ENCODE measurements at regions of chr12 and their contacts with region 1.

Region 1: GRCh38 chr12:48851883-48852733 is at the start of gene DDX23:
- DNase-seq: peak; percentile 73 to 93 (median 89)
- ATAC-seq: peak; percentile 98
- H3K4me3 ChIP-seq: peak within 1 kb of the TSS; percentile 96
- H3K4me3 Mint-ChIP-seq: peak within 1 kb of the TSS; percentile 89 to 99 (median 98)
- H3K27ac ChIP-seq: peak within 1 kb of the TSS; percentile 93
- H3K27ac Mint-ChIP-seq: peak within 1 kb of the TSS; percentile 89 to 100 (median 98)
- H3K4me1 ChIP-seq: peaks cover 18 to 24% of the 10 kb centered on the region in 2 donors
- H3K4me1 Mint-ChIP-seq: peaks cover 30 to 49% (median 43%) of the 10 kb centered on the region in 7 donors
- H3K27me3 ChIP-seq: no peaks in the 10 kb centered on the region
- H3K27me3 Mint-ChIP-seq: no peaks in the 10 kb centered on the region
- total RNA-seq, gene DDX23: 84.0 to 160 (median 127) TPM

Region 2: DNA sequence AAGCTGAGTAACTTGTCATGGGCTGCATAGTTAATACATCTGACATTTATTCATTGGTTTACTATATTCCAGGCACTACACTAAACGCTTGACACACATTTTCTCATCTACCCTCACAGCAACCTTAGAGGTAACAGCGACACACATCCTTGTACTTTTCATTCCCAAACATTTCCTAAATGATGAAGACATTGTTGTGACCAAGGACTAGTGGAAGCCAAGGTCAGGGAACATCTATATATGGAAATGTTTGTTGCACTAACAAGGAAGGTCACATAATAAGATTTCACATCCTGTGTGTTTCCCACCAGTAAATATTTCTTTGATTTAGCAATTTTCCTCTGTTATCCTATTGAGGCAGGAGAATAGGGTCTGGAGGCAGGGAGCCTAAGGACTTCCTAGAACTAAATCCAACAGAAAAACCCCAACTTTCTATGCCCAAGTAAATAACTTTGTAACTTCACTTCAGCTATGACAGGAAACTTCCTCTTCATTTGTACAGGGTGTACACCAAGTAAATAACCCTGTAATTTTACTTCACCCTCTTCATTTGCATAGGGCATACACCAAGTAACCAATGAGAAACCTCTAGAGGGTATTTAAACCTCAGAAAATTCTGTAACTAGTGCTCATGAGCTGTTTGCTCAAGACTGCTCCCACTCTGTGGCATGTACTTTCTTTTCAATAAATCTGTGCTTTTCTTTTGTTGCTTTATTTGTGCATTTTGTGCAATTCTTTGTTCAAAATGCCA is 549.8 kb before region 1 on chr12:
- CTCF ChIA-PET with region 1: no interaction called
- POLR2A ChIA-PET with region 1: no interaction called
- intact Hi-C with region 1: no loop called
- DNase-seq: no peak
- ATAC-seq: no peak
- H3K4me3 ChIP-seq: no peak overlapping the region
- H3K4me3 Mint-ChIP-seq: no peak overlapping the region
- H3K27ac ChIP-seq: no peak overlapping the region
- H3K27ac Mint-ChIP-seq: no peak overlapping the region
- H3K4me1 ChIP-seq: no peaks in the 10 kb centered on the region
- H3K4me1 Mint-ChIP-seq: peaks cover 0 to 1% (median 0%) of the 10 kb centered on the region in 7 donors
- H3K27me3 ChIP-seq: no peaks in the 10 kb centered on the region
- H3K27me3 Mint-ChIP-seq: peaks cover 0 to 12% (median 6%) of the 10 kb centered on the region in 5 donors

Region 3: GRCh38 chr12:48814262-48815125 is 37.6 kb before region 1 on chr12:
- CTCF ChIA-PET with region 1: interaction called, 16 read pairs
- POLR2A ChIA-PET with region 1: interaction called, 9 read pairs
- intact Hi-C with region 1: loop called (anchors 1 to 2 kb)
- DNase-seq: peak; percentile 18 to 93 (median 47)
- ATAC-seq: peak; percentile 86
- H3K4me3 ChIP-seq: peak overlapping the region; percentile 59
- H3K4me3 Mint-ChIP-seq: peak overlapping the region; percentile 58 to 95 (median 91)
- H3K27ac ChIP-seq: no peak overlapping the region
- H3K27ac Mint-ChIP-seq: peak overlapping the region in 4 of 9 donors; percentile 32 to 85 (median 66)
- H3K4me1 ChIP-seq: peaks cover 7 to 19% of the 10 kb centered on the region in 2 donors
- H3K4me1 Mint-ChIP-seq: peaks cover 18 to 39% (median 33%) of the 10 kb centered on the region in 7 donors
- H3K27me3 ChIP-seq: no peaks in the 10 kb centered on the region
- H3K27me3 Mint-ChIP-seq: peaks cover 0 to 23% (median 5%) of the 10 kb centered on the region in 5 donors

Region 4: DNA sequence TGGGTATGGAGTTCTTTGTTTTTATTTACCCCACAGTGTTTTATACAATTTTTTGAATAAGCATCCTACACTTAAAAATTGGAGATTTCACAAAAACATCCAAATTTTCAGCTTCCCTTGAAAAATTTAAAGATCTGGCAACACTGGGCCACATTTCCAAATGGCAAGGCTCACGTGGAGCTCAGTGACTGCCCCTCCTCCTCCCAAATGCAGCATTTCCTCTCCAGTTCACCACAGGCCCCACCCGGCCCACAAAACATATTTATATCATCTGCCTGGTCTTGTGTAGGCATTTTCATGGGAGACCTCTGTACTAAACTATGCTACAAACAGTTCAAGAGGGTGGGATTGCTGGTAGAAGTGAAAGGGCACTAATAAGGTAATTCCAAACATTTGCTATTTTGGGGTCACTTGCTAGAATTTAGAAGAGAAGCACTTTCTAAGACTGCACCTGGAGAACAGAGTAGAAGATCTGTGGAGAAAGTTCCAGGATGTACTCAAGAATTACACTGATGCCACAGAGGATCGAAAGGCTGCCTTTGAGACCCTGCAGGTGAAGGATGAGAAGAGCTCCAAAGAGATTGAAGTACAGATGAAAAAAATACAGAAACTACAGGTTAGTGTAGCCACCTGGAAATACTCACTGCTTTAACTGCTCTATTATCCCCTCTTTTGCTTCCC is 65.9 kb after region 1 on chr12:
- CTCF ChIA-PET with region 1: interaction called, 5 read pairs
- POLR2A ChIA-PET with region 1: interaction called, 7 read pairs
- intact Hi-C with region 1: loop called in 1 of 2 experiments (anchors 1 kb)
- DNase-seq: peak in 7 of 9 donors; percentile 39 to 63 (median 57)
- ATAC-seq: peak; percentile 89
- H3K4me3 ChIP-seq: peak overlapping the region; percentile 57
- H3K4me3 Mint-ChIP-seq: peak overlapping the region; percentile 84 to 92 (median 88)
- H3K27ac ChIP-seq: peak overlapping the region; percentile 73
- H3K27ac Mint-ChIP-seq: peak overlapping the region; percentile 81 to 94 (median 90)
- H3K4me1 ChIP-seq: peaks cover 14 to 25% of the 10 kb centered on the region in 2 donors
- H3K4me1 Mint-ChIP-seq: peaks cover 20 to 46% (median 43%) of the 10 kb centered on the region in 7 donors
- H3K27me3 ChIP-seq: no peaks in the 10 kb centered on the region
- H3K27me3 Mint-ChIP-seq: no peaks in the 10 kb centered on the region

Region 5: GRCh38 chr12:48965298-48965838 is 113.3 kb after region 1 on chr12:
- CTCF ChIA-PET with region 1: no interaction called
- POLR2A ChIA-PET with region 1: no interaction called
- intact Hi-C with region 1: no loop called
- DNase-seq: no peak
- ATAC-seq: no peak
- H3K4me3 ChIP-seq: no peak overlapping the region
- H3K4me3 Mint-ChIP-seq: no peak overlapping the region
- H3K27ac ChIP-seq: no peak overlapping the region
- H3K27ac Mint-ChIP-seq: no peak overlapping the region
- H3K4me1 ChIP-seq: peaks cover 5 to 16% of the 10 kb centered on the region in 2 donors
- H3K4me1 Mint-ChIP-seq: peaks cover 0 to 14% (median 2%) of the 10 kb centered on the region in 7 donors
- H3K27me3 ChIP-seq: peaks cover 0 to 2% of the 10 kb centered on the region in 2 donors
- H3K27me3 Mint-ChIP-seq: peaks cover 0 to 62% (median 5%) of the 10 kb centered on the region in 5 donors

Region 6: DNA sequence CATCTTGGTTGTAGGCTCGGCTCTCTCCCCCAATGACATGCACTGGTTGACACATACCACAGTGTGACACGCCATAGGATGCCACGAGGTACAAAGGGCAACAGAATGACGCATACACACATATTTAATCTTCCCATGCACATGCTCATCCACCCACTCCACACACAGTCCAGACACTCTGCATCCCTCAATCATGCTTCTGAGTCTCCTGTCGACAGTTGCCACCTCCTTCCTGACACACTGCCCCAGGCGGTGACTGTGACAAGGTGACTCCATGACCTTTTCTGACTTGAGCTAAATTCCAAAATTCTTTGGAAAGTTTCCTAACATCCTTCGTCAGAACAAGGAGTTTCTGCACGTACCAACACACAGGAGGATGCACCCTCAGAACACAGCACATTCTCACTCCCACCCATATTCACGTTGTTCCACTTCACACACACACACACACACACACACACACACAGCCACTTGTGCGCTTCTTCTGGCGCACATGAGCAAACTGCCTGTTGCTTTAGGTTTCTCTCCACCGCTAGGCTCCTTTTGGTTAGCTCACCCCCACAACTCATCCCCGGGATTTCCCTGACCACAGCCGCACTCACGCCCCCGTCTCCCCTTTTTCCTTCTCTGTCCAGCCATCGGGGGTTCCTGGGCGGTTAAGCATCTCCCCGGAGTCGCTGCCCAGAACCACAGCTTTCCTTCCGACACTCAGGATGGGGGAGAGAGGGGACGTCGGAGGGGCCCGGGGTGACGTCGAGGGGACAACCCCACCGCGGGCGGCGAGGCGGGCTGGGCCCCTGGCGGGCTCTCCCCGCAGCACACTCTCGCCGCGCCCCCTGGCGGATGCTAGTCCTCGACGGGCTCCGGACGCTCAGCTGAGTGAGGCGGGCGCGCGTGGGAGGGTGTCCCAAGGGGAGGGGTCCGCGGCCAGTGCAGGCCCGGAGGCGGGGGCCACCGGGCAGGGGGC is 125.5 kb after region 1 on chr12:
- CTCF ChIA-PET with region 1: interaction called, 4 read pairs
- POLR2A ChIA-PET with region 1: interaction called, 26 read pairs
- intact Hi-C with region 1: loop called (anchors 1 to 2 kb)
- DNase-seq: peak; percentile 52 to 90 (median 75)
- ATAC-seq: peak; percentile 77
- H3K4me3 ChIP-seq: no peak overlapping the region
- H3K4me3 Mint-ChIP-seq: peak overlapping the region; percentile 24 to 85 (median 56)
- H3K27ac ChIP-seq: no peak overlapping the region
- H3K27ac Mint-ChIP-seq: peak overlapping the region in 7 of 9 donors; percentile 26 to 81 (median 61)
- H3K4me1 ChIP-seq: peaks cover 37% of the 10 kb centered on the region in 2 donors
- H3K4me1 Mint-ChIP-seq: peaks cover 28 to 53% (median 47%) of the 10 kb centered on the region in 7 donors
- H3K27me3 ChIP-seq: peaks cover 3 to 11% of the 10 kb centered on the region in 2 donors
- H3K27me3 Mint-ChIP-seq: peaks cover 18 to 92% (median 40%) of the 10 kb centered on the region in 5 donors

Region 7: GRCh38 chr12:49060237-49061156 is 208.4 kb after region 1 on chr12 and contains the start of gene KMT2D:
- CTCF ChIA-PET with region 1: no interaction called
- POLR2A ChIA-PET with region 1: no interaction called
- intact Hi-C with region 1: loop called in 1 of 2 experiments (anchors 5 kb)
- DNase-seq: peak; percentile 80 to 94 (median 91)
- ATAC-seq: peak; percentile 86
- H3K4me3 ChIP-seq: peak within 1 kb of the TSS; percentile 87
- H3K4me3 Mint-ChIP-seq: peak within 1 kb of the TSS; percentile 91 to 98 (median 95)
- H3K27ac ChIP-seq: peak within 1 kb of the TSS; percentile 87
- H3K27ac Mint-ChIP-seq: peak within 1 kb of the TSS; percentile 90 to 99 (median 97)
- H3K4me1 ChIP-seq: peaks cover 38 to 40% of the 10 kb centered on the region in 2 donors
- H3K4me1 Mint-ChIP-seq: peaks cover 44 to 55% (median 51%) of the 10 kb centered on the region in 7 donors
- H3K27me3 ChIP-seq: no peaks in the 10 kb centered on the region
- H3K27me3 Mint-ChIP-seq: no peaks in the 10 kb centered on the region
- total RNA-seq, gene KMT2D: 129 to 167 (median 151) TPM

Region 8: GRCh38 chr12:49232940-49233841 is 381.1 kb after region 1 on chr12:
- CTCF ChIA-PET with region 1: interaction called, 3 read pairs
- POLR2A ChIA-PET with region 1: no interaction called
- intact Hi-C with region 1: loop called in 1 of 2 experiments (anchors 1 kb)
- DNase-seq: peak in 1 of 9 donors; percentile 7
- ATAC-seq: no peak
- H3K4me3 ChIP-seq: no peak overlapping the region
- H3K4me3 Mint-ChIP-seq: peak overlapping the region; percentile 68 to 89 (median 85)
- H3K27ac ChIP-seq: no peak overlapping the region
- H3K27ac Mint-ChIP-seq: peak overlapping the region; percentile 65 to 93 (median 89)
- H3K4me1 ChIP-seq: peaks cover 0 to 7% of the 10 kb centered on the region in 2 donors
- H3K4me1 Mint-ChIP-seq: peaks cover 0 to 12% (median 9%) of the 10 kb centered on the region in 7 donors
- H3K27me3 ChIP-seq: no peaks in the 10 kb centered on the region
- H3K27me3 Mint-ChIP-seq: peaks cover 0 to 7% (median 0%) of the 10 kb centered on the region in 5 donors